Naive thymus-derived CD4-positive, alpha-beta T cell (primary cell): ENCODE measurements at regions of chr9 and their contacts with region 1.

Region 1: DNA sequence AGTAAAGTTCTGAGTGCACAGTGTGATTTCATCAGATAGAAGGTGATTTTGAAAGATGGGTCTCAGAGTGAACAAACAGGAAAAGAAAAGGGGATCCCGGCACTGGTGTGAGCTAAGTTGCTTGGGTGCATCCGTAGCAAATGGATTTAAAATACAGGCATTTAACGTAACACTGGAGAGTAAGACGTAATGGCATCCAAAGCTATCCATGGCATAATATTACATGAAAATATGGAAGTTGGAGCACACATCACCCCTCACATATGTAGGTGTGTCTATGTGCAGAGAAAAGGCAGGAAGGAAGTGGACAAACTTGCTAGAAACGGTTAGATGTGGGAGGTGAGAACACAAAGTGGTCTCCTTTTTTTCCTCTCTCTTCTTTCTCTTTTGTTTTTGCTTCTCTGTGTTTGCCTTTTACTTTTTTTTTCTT is 38.2 kb upstream of the SEMA4D start:
- DNase-seq: peak in 7 of 9 donors; percentile 51 to 79 (median 73)
- ATAC-seq: peak; percentile 81
- H3K4me3 ChIP-seq: peak overlapping the region; percentile 11
- H3K4me3 Mint-ChIP-seq: peak overlapping the region; percentile 67 to 83 (median 75)
- H3K27ac ChIP-seq: peak overlapping the region; percentile 71
- H3K27ac Mint-ChIP-seq: peak overlapping the region; percentile 69 to 100 (median 92)
- H3K4me1 ChIP-seq: peaks cover 82 to 93% of the 10 kb centered on the region in 2 donors
- H3K4me1 Mint-ChIP-seq: peaks cover 72 to 97% (median 95%) of the 10 kb centered on the region in 7 donors
- H3K27me3 ChIP-seq: no peaks in the 10 kb centered on the region
- H3K27me3 Mint-ChIP-seq: no peaks in the 10 kb centered on the region

Region 2: GRCh38 chr9:89483592-89484522 is 52.3 kb before region 1 on chr9:
- CTCF ChIA-PET with region 1: interaction called, 4 read pairs
- POLR2A ChIA-PET with region 1: interaction called, 13 read pairs
- intact Hi-C with region 1: loop called in 1 of 2 experiments (anchors 1 kb)
- DNase-seq: peak; percentile 41 to 76 (median 66)
- ATAC-seq: peak; percentile 84
- H3K4me3 ChIP-seq: peak overlapping the region; percentile 48
- H3K4me3 Mint-ChIP-seq: peak overlapping the region; percentile 85 to 100 (median 90)
- H3K27ac ChIP-seq: peak overlapping the region; percentile 68
- H3K27ac Mint-ChIP-seq: peak overlapping the region; percentile 88 to 99 (median 93)
- H3K4me1 ChIP-seq: peaks cover 67 to 71% of the 10 kb centered on the region in 2 donors
- H3K4me1 Mint-ChIP-seq: peaks cover 70 to 96% (median 90%) of the 10 kb centered on the region in 7 donors
- H3K27me3 ChIP-seq: no peaks in the 10 kb centered on the region
- H3K27me3 Mint-ChIP-seq: no peaks in the 10 kb centered on the region

Region 3: DNA sequence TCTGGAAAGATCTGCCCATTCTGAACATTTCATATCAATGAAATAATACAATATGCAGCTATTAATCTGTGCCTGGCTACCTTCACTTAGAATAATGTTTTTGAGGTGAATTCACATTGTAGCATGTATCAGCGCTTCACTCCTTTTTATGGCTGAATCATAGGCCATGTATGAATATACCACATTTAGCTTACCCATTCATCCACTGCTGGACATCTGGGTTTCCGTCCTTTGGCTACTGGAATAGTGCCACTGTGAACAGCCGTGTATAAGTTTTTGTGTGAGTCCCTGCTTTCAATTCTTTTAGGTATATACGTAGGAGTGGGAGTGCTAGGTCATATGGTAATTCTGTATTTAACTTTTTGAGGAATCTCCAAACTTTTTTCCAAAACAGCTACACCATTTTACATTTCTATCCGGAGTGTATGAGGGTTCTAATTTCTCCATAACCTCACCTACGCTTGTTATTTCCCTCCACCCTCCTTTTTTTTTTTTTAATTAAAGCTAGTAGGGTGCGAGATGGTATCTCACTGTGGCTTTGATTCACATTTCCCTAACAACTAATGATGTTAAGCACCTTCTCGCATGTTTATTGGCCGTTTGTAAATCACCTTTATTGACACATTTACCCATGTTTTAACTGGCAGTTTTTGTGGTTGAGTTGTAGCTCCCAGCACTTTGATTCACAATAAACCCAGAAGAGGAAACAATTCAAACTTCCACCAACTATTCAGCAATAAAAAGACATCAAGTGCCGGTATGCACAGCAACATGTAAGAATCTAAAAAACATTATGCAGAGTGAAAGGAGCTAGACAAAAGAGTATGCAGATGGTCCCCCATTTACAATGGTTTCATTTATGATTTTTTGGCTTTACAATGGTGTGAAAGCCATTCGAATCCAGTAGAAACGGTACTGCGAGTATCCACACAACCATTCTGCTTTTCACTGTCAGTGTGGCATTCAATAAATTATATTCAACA is 46.3 kb before region 1 on chr9:
- CTCF ChIA-PET with region 1: no interaction called
- POLR2A ChIA-PET with region 1: interaction called, 21 read pairs
- intact Hi-C with region 1: loop called in 1 of 2 experiments (anchors 2 kb)
- DNase-seq: peak in 8 of 9 donors; percentile 15 to 87 (median 78)
- ATAC-seq: peak; percentile 90
- H3K4me3 ChIP-seq: peak overlapping the region; percentile 22
- H3K4me3 Mint-ChIP-seq: peak overlapping the region; percentile 60 to 100 (median 88)
- H3K27ac ChIP-seq: peak overlapping the region; percentile 69
- H3K27ac Mint-ChIP-seq: peak overlapping the region; percentile 82 to 98 (median 89)
- H3K4me1 ChIP-seq: peaks cover 81 to 82% of the 10 kb centered on the region in 2 donors
- H3K4me1 Mint-ChIP-seq: peaks cover 78 to 100% (median 92%) of the 10 kb centered on the region in 7 donors
- H3K27me3 ChIP-seq: no peaks in the 10 kb centered on the region
- H3K27me3 Mint-ChIP-seq: no peaks in the 10 kb centered on the region

Region 4: DNA sequence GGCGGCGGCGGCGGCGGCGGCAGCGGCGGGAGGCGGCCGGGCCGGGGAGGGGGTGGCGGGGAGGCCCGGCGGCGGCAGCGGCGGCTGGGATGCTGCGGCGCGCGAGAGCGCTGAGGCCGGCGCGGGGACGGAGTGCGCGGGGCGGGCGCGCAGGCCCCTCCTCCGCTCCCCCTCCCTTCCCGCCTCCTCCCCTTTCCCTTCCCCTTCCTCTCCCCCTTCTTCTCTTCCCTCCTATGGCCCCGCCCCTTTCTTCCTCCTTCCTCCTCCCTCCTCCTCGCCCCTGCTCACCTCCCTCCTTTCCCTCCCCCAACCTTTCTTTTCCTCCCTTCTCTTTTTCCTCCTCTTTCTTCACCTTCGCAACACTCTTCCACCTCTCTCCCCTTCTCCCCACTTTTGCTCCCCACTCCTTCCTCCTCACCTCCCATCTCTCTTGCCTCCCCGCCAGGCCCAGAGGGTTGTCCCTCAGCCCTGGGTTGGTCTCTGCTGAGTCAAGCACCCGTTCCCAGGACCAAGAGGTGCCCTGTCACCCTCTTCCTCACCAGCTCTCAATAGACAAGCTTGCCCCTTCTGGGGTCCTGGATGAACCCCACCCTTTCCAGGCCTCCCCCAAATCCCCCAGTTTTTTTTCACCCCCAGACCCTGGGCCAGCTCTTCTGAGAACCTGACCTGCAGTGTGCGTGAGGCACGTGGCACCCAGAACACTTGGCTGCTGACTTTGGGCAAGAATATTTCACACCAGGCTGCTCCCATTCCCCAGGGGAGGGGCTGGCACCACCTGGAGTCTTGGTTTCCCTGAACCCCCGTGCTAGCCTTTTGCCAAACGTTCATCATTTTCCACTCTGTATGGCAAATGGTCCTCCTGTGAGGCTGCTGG is 37.9 kb before region 1 on chr9 and contains the start of gene SEMA4D:
- CTCF ChIA-PET with region 1: interaction called, 3 read pairs
- POLR2A ChIA-PET with region 1: interaction called, 21 read pairs
- intact Hi-C with region 1: loop called (anchors 1 kb)
- DNase-seq: peak in 2 of 9 donors; percentile 48 to 71
- ATAC-seq: peak; percentile 22
- H3K4me3 ChIP-seq: peak within 1 kb of the TSS; percentile 67
- H3K4me3 Mint-ChIP-seq: peak within 1 kb of the TSS; percentile 85 to 100 (median 98)
- H3K27ac ChIP-seq: peak within 1 kb of the TSS; percentile 76
- H3K27ac Mint-ChIP-seq: peak within 1 kb of the TSS; percentile 86 to 99 (median 94)
- H3K4me1 ChIP-seq: peaks cover 72 to 75% of the 10 kb centered on the region in 2 donors
- H3K4me1 Mint-ChIP-seq: peaks cover 72 to 90% (median 77%) of the 10 kb centered on the region in 7 donors
- H3K27me3 ChIP-seq: no peaks in the 10 kb centered on the region
- H3K27me3 Mint-ChIP-seq: no peaks in the 10 kb centered on the region
- total RNA-seq, gene SEMA4D: 389 to 465 (median 460) TPM

Region 5: DNA sequence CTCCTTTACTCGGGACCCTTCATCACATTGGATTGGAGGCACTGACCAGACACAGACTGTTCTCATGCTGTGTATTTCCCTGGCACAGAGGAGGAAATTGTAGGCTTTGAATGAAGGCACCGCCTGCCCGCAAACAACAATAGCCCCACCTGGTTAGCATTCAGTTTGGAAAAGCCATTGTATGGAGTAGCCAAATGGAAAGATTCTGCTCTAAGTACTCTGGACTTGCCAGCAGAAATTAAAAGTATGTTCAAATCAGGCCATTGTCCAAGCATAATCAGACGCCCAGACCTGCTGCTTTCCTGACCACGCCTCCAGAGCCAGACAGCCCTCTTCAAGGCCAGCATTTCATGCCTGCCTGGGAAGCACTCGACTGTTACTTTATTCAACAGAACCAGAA is 30.2 kb before region 1 on chr9:
- CTCF ChIA-PET with region 1: interaction called, 4 read pairs
- POLR2A ChIA-PET with region 1: interaction called, 20 read pairs
- intact Hi-C with region 1: no loop called
- DNase-seq: no peak
- ATAC-seq: no peak
- H3K4me3 ChIP-seq: no peak overlapping the region
- H3K4me3 Mint-ChIP-seq: peak overlapping the region in 2 of 10 donors; percentile 4 to 49
- H3K27ac ChIP-seq: no peak overlapping the region
- H3K27ac Mint-ChIP-seq: peak overlapping the region in 6 of 9 donors; percentile 1 to 81 (median 77)
- H3K4me1 ChIP-seq: peaks cover 39 to 73% of the 10 kb centered on the region in 2 donors
- H3K4me1 Mint-ChIP-seq: peaks cover 69 to 96% (median 88%) of the 10 kb centered on the region in 7 donors
- H3K27me3 ChIP-seq: no peaks in the 10 kb centered on the region
- H3K27me3 Mint-ChIP-seq: no peaks in the 10 kb centered on the region